ENCODE measurements at regions of chr10 and their contacts with region 1.

Region 1: DNA sequence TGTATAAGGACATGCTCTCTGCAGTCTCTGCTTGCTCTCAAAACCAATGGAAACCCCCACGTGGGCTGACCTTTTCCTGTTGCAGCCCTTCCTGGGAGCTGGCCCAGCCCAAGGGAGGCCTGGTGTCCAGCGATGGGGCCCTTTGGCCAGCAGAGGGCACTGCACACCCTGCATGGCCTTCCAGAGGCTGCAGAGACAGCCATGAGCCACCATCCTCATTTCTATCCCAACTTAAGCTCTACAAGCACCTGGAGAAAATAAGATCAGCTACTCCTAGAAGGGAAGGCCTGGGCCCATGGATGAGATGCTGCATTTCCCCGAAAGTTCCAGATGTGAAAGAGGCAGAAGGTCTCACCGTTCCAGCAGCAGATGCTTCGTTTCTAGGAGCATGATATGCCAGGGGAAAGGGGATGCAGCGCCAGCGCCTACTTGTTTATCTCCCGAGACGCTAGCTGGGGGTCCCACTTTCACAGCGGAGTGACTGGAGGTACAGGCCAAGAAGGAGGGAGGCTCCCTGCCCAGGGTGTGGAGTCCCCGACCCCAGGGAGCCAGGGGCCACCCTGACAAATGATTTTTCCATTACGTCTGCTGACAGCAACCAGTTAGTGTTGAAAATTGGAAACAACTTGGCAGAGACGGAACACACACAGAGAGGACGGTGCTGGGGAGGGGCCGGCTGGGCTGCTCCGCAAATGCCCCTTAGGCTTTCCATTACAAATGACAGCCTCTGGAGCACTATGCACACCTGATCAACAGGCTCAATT is 106.4 kb downstream of the ZRANB1 start:
- DNase-seq: peak; percentile 64 to 69
- ATAC-seq: peak; percentile 89 to 96 (median 94)
- H3K4me3 ChIP-seq: no peak overlapping the region
- H3K4me3 Mint-ChIP-seq: no peak overlapping the region
- H3K27ac ChIP-seq: no peak overlapping the region
- H3K27ac Mint-ChIP-seq: peak overlapping the region; percentile 85 to 88
- H3K4me1 ChIP-seq: peaks cover 20% of the 10 kb centered on the region
- H3K4me1 Mint-ChIP-seq: peaks cover 80 to 81% of the 10 kb centered on the region in 2 donors
- H3K27me3 ChIP-seq: no peaks in the 10 kb centered on the region
- H3K27me3 Mint-ChIP-seq: no peaks in the 10 kb centered on the region
- CTCF ChIP-seq: peak; percentile 91

Region 2: GRCh38 chr10:124824507-124824906 is 223.8 kb before region 1 on chr10:
- intact Hi-C with region 1: no loop called
- DNase-seq: no peak
- ATAC-seq: no peak
- H3K4me3 ChIP-seq: no peak overlapping the region
- H3K4me3 Mint-ChIP-seq: no peak overlapping the region
- H3K27ac ChIP-seq: no peak overlapping the region
- H3K27ac Mint-ChIP-seq: no peak overlapping the region
- H3K4me1 ChIP-seq: no peaks in the 10 kb centered on the region
- H3K4me1 Mint-ChIP-seq: no peaks in the 10 kb centered on the region
- H3K27me3 ChIP-seq: no peaks in the 10 kb centered on the region
- H3K27me3 Mint-ChIP-seq: no peaks in the 10 kb centered on the region
- CTCF ChIP-seq: no peak

Region 3: DNA sequence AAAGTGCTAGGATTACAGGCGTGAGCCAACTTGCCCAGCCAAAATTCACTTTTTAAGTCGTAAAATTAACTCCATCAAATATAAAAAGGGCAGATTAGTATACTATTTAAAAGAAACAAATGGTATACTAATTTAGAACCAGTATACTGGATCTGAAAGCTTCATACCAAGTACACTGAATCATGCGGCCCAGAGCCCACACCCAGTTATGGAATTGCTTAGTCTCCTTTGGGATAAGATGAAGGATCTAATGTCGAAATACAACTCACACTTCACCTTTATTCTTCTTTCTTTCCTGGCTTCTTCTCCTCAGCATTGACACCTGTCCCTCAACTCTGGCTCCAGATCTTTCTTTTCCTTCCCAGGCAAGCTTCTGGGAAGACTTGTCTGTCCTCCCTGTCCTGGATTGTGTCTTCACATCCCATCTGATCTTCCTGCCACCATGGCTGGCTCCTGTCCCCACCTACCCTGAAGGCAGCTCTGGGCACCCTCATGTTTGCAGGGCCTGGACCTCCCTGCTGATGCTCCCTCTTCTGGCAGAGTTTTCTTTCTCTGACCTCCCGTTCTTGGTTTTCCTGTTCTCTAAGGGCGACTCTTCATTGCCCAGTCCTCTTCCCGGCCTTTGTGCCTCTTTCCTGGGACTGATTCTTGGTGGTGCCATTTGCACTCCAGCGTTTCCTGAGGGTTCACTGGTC is 169.8 kb after region 1 on chr10:
- intact Hi-C with region 1: loop called (anchors 1 kb)
- DNase-seq: no peak
- ATAC-seq: peak in 1 of 3 donors; percentile 40
- H3K4me3 ChIP-seq: no peak overlapping the region
- H3K4me3 Mint-ChIP-seq: no peak overlapping the region
- H3K27ac ChIP-seq: no peak overlapping the region
- H3K27ac Mint-ChIP-seq: no peak overlapping the region
- H3K4me1 ChIP-seq: no peaks in the 10 kb centered on the region
- H3K4me1 Mint-ChIP-seq: peaks cover 0 to 7% of the 10 kb centered on the region in 2 donors
- H3K27me3 ChIP-seq: no peaks in the 10 kb centered on the region
- H3K27me3 Mint-ChIP-seq: peaks cover 24 to 40% of the 10 kb centered on the region in 2 donors
- CTCF ChIP-seq: no peak

Region 4: DNA sequence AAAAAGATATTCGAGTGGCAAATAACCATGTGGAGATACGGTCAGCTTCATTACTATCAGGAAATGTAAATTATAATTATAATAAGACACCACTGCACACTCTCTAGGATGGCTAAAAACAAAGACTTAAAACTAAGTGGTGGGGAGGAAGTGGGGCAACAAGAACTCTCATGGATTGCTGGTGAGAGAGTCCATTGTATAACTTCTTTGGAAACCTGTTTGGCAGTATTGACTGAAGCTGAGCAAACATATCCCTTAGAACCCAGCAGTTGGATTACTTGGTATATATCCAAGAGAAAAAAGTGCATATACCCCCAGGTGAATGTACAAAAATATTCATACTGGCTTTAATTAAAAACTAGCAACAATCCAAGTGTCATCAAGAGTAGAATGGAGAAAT is 245.8 kb after region 1 on chr10:
- intact Hi-C with region 1: no loop called
- DNase-seq: no peak
- ATAC-seq: no peak
- H3K4me3 ChIP-seq: no peak overlapping the region
- H3K4me3 Mint-ChIP-seq: no peak overlapping the region
- H3K27ac ChIP-seq: no peak overlapping the region
- H3K27ac Mint-ChIP-seq: no peak overlapping the region
- H3K4me1 ChIP-seq: no peaks in the 10 kb centered on the region
- H3K4me1 Mint-ChIP-seq: no peaks in the 10 kb centered on the region
- H3K27me3 ChIP-seq: no peaks in the 10 kb centered on the region
- H3K27me3 Mint-ChIP-seq: peaks cover 37 to 60% of the 10 kb centered on the region in 2 donors
- CTCF ChIP-seq: no peak

Region 5: DNA sequence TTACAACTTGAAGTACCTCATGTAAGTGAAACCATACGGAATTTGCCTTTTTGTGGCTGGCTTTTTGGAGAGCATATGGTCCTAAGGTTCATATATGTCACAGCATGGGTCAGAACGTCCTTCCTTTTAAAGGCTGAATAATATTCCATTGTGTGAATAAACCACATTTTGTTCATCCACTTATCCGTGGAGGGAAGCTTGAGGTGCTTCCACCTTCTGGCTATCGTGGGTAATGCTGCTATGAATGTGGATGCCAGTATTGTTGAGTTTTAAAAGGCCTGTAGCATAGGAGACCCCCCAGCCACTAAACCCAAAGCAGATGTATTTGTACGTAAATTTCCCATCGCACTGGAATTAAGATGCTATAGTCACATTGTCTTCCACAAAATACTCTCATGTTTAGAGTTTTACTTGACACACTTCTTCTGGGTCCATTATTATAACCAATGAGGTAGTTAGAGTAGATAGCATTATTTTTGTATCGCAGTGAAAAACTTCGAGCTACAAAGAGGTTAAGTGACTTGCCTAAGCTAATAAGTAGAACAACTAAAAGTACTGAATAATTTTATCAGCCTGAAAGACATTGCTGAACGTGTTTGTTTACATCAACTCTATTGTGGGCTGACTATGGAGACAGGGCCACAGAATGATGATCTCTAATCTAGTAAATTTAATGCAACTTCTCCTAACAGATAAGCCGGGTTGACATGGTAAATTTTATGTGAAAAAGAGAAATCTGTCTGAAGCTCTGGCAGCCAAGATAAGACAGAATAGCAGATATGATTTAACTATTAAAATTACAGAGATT is 295.0 kb after region 1 on chr10:
- intact Hi-C with region 1: loop called (anchors 1 kb)
- DNase-seq: no peak
- ATAC-seq: peak in 1 of 3 donors; percentile 45
- H3K4me3 ChIP-seq: no peak overlapping the region
- H3K4me3 Mint-ChIP-seq: no peak overlapping the region
- H3K27ac ChIP-seq: no peak overlapping the region
- H3K27ac Mint-ChIP-seq: no peak overlapping the region
- H3K4me1 ChIP-seq: no peaks in the 10 kb centered on the region
- H3K4me1 Mint-ChIP-seq: no peaks in the 10 kb centered on the region
- H3K27me3 ChIP-seq: no peaks in the 10 kb centered on the region
- H3K27me3 Mint-ChIP-seq: peaks cover 16 to 42% of the 10 kb centered on the region in 2 donors
- CTCF ChIP-seq: peak; percentile 56